ENCODE measurements at regions of chr6 and their contacts with region 1.

Region 1: DNA sequence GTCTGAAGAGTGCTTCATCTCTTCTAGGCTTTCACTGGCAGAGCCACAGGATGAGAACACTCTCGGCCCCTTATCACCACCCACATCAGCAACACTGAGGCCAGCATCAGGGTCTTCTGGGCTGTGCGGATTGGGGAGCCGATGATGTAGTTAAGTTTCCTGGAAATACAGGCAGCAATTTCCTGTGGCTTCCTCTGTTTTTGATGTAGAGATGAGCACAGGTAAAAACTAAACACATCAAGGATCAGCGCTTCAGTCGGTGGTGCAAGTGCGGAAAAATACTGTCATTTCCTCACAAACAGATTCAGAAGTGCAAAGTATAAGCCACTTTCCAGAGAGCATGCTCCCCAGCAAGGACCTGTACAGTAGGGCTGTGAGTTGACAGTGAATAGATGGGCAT is 62.6 kb downstream of the BACH2 start:
- DNase-seq: peak; percentile 79 to 89 (median 80)
- H3K4me3 ChIP-seq: no peak overlapping the region
- H3K4me3 Mint-ChIP-seq: peak overlapping the region; percentile 3 to 90 (median 74)
- H3K27ac ChIP-seq: peak overlapping the region; percentile 32
- H3K27ac Mint-ChIP-seq: peak overlapping the region; percentile 65 to 97 (median 92)
- H3K4me1 ChIP-seq: peaks cover 90% of the 10 kb centered on the region
- H3K4me1 Mint-ChIP-seq: peaks cover 63 to 97% (median 81%) of the 10 kb centered on the region in 4 donors
- H3K27me3 ChIP-seq: no peaks in the 10 kb centered on the region
- H3K27me3 Mint-ChIP-seq: no peaks in the 10 kb centered on the region

Region 2: DNA sequence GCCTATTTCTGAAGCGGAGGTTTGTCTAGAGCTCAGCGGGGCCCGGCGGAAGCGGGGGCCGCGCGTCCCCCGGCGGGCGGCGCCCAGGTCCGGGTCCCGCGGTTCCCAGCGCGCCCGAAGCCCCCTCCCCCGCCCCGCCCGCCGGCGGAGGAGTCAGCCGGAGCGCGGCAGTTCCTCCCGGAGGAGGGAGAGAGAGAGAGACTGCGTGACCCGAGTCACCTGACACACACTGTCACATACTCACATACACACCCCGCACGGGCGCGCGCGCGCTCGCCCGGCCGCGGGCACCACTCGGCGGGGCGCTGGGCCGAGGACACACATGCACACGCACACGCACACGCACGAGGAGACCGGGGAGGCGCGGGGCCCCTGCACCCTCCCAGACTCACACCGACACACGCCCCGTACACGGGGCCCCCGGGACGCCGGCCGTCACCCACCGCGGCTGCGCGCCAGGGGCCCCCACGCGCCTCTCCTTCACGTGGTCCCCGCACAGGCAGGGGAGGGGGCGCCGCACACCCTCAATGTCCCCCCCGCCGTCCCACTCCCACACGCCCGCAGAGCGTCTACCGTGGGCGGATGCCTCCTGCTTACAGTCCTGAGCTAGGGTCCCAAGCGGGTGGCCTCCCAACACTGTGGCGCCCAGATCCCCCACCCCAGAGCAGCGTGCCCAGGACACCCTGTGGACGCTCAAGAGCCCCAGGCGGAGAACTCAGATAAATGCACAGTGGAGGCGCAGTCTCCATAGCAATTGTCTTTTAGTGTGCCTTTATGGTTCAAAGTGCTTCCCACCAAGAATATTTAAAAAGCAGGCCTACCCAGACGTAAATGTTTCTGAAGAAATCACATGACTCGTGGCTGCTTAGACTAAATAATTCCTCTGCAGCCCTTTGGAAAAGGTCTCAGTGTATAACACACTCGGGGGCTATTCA is 821.7 kb before region 1 on chr6 and contains the start of gene RRAGD:
- CTCF ChIA-PET with region 1: no interaction called
- POLR2A ChIA-PET with region 1: no interaction called
- intact Hi-C with region 1: no loop called
- DNase-seq: peak; percentile 57 to 75 (median 65)
- H3K4me3 ChIP-seq: peak within 1 kb of the TSS; percentile 38 to 49
- H3K4me3 Mint-ChIP-seq: peak within 1 kb of the TSS; percentile 90 to 98 (median 94)
- H3K27ac ChIP-seq: peak within 1 kb of the TSS; percentile 25
- H3K27ac Mint-ChIP-seq: peak within 1 kb of the TSS; percentile 72 to 91 (median 82)
- H3K4me1 ChIP-seq: peaks cover 19% of the 10 kb centered on the region
- H3K4me1 Mint-ChIP-seq: peaks cover 10 to 25% (median 16%) of the 10 kb centered on the region in 4 donors
- H3K27me3 ChIP-seq: peaks cover 4% of the 10 kb centered on the region
- H3K27me3 Mint-ChIP-seq: peaks cover 4 to 14% of the 10 kb centered on the region in 2 donors
- total RNA-seq, gene RRAGD: 5.9 to 6.8 TPM

Region 3: DNA sequence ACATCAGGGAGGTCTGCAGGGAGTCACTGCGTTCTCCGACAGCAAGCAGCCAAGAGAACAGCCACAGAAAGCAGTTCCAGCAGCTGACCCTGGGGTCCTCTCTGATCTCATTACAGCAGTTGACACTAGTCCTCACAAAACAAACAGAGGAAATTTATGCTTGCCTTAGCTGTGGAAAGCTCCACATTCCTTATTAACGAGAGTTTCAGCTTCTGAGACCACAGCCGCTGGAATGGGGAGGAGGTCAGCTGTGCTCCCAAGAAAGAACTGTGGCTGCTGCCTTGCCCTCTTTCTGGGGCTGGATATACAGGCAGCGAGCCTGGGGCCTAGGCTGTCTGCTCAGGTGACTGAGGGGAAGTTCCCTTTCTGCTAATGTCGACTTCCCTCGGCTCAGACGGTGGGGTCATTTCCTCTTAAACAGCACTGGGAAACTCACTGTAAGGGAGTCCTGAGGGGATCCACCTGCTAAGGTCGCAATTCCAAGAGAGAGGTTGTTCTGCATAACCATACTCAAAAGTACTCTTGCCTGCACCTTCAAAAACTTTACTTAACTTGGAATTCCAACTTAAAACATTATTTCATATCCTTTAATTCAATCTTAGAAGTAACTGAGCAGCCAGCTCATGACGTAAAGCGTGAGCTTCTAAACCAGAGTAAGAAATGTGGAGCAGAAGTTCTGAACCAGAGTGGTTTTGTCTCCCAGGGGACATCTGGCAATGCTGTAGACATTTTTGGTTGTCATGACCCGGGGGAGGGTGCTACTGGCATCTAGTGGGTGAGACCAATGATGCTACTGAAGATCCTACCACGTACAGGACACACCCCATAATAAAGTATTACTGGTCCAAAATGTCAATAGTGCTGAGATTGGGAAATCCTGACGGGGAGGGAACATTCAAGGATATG is 17.7 kb before region 1 on chr6:
- CTCF ChIA-PET with region 1: interaction called, 4 read pairs
- POLR2A ChIA-PET with region 1: interaction called, 8 read pairs
- intact Hi-C with region 1: loop called (anchors 1 kb)
- DNase-seq: peak in 4 of 5 donors; percentile 11 to 73 (median 31)
- H3K4me3 ChIP-seq: no peak overlapping the region
- H3K4me3 Mint-ChIP-seq: peak overlapping the region in 5 of 8 donors; percentile 6 to 61 (median 35)
- H3K27ac ChIP-seq: peak overlapping the region; percentile 43
- H3K27ac Mint-ChIP-seq: peak overlapping the region in 3 of 7 donors; percentile 84 to 89 (median 86)
- H3K4me1 ChIP-seq: peaks cover 59% of the 10 kb centered on the region
- H3K4me1 Mint-ChIP-seq: peaks cover 27 to 30% (median 28%) of the 10 kb centered on the region in 4 donors
- H3K27me3 ChIP-seq: no peaks in the 10 kb centered on the region
- H3K27me3 Mint-ChIP-seq: no peaks in the 10 kb centered on the region

Region 4: GRCh38 chr6:90256698-90257485 is 22.9 kb after region 1 on chr6:
- CTCF ChIA-PET with region 1: no interaction called
- POLR2A ChIA-PET with region 1: no interaction called
- intact Hi-C with region 1: loop called (anchors 2 kb)
- DNase-seq: peak; percentile 50 to 76 (median 71)
- H3K4me3 ChIP-seq: no peak overlapping the region
- H3K4me3 Mint-ChIP-seq: peak overlapping the region in 6 of 8 donors; percentile 2 to 52 (median 13)
- H3K27ac ChIP-seq: peak overlapping the region; percentile 13
- H3K27ac Mint-ChIP-seq: peak overlapping the region; percentile 61 to 90 (median 82)
- H3K4me1 ChIP-seq: peaks cover 28% of the 10 kb centered on the region
- H3K4me1 Mint-ChIP-seq: peaks cover 29 to 77% (median 55%) of the 10 kb centered on the region in 4 donors
- H3K27me3 ChIP-seq: no peaks in the 10 kb centered on the region
- H3K27me3 Mint-ChIP-seq: no peaks in the 10 kb centered on the region

Region 5: GRCh38 chr6:90319044-90319443 is 85.0 kb after region 1 on chr6:
- CTCF ChIA-PET with region 1: no interaction called
- POLR2A ChIA-PET with region 1: no interaction called
- intact Hi-C with region 1: no loop called
- DNase-seq: no peak
- H3K4me3 ChIP-seq: no peak overlapping the region
- H3K4me3 Mint-ChIP-seq: no peak overlapping the region
- H3K27ac ChIP-seq: no peak overlapping the region
- H3K27ac Mint-ChIP-seq: no peak overlapping the region
- H3K4me1 ChIP-seq: peaks cover 4% of the 10 kb centered on the region
- H3K4me1 Mint-ChIP-seq: peaks cover 0 to 8% (median 6%) of the 10 kb centered on the region in 4 donors
- H3K27me3 ChIP-seq: no peaks in the 10 kb centered on the region
- H3K27me3 Mint-ChIP-seq: peaks cover 3 to 10% of the 10 kb centered on the region in 2 donors

Region 6: DNA sequence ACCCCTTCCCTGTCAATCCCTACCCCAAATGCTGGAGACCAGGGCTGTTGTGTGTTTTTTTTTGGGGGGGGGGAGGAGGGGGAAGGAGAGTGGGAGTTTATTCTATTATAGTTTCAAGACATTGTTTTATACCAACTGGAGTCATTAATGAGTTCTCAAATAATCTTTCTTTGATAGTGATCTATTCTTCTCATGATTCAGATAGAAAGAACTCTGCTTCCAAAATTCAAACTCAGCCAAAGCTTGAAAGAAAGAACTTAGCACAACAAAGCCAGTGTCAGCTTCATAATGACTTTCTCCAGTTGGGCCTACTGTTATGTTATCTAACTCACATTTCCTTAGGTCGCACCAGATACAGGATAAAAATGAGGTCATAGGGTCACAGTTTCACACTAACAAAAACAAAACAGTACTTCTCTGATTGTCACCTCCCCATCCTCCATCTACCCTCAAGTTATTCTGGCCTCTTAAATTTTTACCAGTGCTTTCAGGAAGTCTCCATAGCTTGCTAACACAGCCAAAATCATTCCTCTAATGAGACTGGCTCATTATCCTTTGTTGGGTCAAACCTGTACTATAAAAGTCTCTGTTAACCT is 371.9 kb after region 1 on chr6:
- CTCF ChIA-PET with region 1: no interaction called
- POLR2A ChIA-PET with region 1: no interaction called
- intact Hi-C with region 1: no loop called
- DNase-seq: no peak
- H3K4me3 ChIP-seq: no peak overlapping the region
- H3K4me3 Mint-ChIP-seq: no peak overlapping the region
- H3K27ac ChIP-seq: no peak overlapping the region
- H3K27ac Mint-ChIP-seq: no peak overlapping the region
- H3K4me1 ChIP-seq: peaks cover 8% of the 10 kb centered on the region
- H3K4me1 Mint-ChIP-seq: peaks cover 4 to 8% (median 6%) of the 10 kb centered on the region in 4 donors
- H3K27me3 ChIP-seq: peaks cover 9% of the 10 kb centered on the region
- H3K27me3 Mint-ChIP-seq: peaks cover 18 to 47% of the 10 kb centered on the region in 2 donors

Region 7: GRCh38 chr6:91970700-91971099 is 1736.7 kb after region 1 on chr6:
- CTCF ChIA-PET with region 1: no interaction called
- POLR2A ChIA-PET with region 1: no interaction called
- intact Hi-C with region 1: no loop called
- DNase-seq: no peak
- H3K4me3 ChIP-seq: no peak overlapping the region
- H3K4me3 Mint-ChIP-seq: no peak overlapping the region
- H3K27ac ChIP-seq: no peak overlapping the region
- H3K27ac Mint-ChIP-seq: no peak overlapping the region
- H3K4me1 ChIP-seq: no peaks in the 10 kb centered on the region
- H3K4me1 Mint-ChIP-seq: no peaks in the 10 kb centered on the region
- H3K27me3 ChIP-seq: no peaks in the 10 kb centered on the region
- H3K27me3 Mint-ChIP-seq: no peaks in the 10 kb centered on the region